ENCODE measurements at regions of chr14 and their contacts with region 1.

Region 1: DNA sequence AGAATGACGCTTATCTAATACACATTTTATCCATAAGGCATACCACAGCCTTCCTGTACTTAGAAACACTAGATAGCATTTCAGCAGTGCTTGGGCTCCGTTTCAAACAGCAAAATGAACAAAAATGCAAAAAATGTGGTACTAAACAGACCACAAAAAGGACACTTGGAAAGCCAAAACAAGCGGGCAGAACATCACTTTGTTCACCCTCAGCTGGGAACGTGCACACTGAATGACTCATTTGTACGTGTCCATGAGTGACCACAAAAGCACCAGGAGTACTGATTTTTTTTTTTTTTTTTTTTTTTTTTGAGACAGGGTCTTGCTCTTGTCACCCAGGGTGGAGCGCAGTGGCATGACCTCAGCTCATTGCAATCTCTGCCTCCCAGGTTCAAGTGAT is 8.9 kb upstream of the FOXN3 start:
- DNase-seq: no peak

Region 2: DNA sequence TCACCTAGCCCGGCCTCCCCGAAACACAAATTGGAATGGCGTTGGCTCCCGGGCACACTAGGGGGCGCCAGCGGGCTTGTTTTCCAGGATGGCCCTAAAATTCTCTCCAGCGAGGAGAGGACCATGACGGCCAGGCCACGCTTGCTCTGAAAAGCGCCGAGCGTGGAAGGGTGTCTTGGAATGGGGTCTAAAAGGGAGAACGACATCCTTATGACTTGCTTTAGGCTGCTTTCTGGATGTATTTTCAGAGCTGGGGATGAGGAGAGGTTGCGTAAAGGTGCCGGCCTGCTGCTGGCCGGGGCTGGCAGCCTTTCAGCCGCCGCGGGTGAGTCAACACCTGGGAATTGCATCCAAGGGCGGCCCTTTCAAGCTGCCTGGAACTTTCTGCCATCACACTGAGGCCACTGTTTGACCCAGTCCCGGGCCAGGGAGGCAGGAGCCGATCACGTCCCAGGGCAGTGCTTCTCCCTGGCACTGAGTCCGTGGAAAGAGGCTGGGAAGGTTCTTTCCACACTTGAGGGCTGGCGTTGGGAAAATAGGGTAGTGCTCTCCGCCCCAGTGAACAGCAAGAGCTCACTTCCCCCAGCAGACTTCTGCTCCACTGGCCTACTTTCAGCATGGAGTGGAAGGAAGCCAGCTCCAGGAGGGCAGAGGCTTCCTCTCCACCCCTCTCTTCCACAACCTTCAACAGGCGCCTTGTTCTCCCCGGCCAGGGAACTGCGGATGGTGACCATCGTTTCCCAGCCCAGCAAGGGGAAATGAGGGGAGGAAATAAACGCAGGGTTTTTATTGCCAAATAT is 385.3 kb before region 1 on chr14:
- intact Hi-C with region 1: loop called in 1 of 2 experiments (anchors 5 kb)
- DNase-seq: peak; percentile 96

Region 3: GRCh38 chr14:89826596-89826995 is 400.7 kb after region 1 on chr14:
- intact Hi-C with region 1: loop called in 1 of 2 experiments (anchors 2 kb)
- DNase-seq: no peak

Region 4: DNA sequence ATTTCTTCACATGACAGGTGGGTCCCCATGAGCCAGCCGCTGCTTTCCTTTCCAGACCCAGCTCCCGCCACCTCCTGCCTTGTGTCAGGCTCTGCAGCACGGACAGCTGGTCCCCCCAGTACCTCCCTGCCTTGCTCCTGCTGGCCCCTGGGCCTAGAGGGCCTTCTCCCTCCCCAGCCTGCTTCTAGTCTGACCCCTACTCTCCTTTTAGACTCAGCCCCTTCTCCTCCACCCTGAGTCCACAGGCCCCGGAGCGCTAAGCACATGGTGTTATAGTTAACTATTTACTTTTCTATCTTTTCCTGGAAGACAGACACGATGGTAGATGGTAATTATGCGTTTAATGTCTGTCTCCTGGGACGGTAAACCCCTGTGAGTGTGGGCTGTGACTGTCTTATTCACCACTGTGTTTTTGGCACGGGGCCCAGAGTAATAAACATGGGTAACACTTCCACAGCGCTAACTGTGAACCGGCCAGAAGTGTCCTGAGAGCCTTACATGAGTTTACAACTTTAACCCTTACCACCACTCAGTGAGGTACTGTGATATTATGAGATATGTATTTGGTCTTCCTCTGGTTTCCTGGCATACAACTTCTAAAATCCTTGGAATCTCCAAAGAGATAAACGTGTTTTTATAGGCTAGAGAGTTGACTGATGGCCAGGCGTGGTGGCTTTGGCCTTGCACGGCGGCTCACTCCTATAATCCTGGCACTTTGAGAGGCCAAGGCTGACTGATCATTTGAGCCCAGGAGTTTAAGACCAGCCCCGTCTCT is 1729.1 kb after region 1 on chr14:
- intact Hi-C with region 1: no loop called
- DNase-seq: peak; percentile 13

Measured in posterior vena cava (tissue), 2 donors.